ENCODE measurements at regions of chr2 and their contacts with region 1.

Region 1: GRCh38 chr2:230335451-230335863 is 8.5 kb downstream of the SP140L start:
- DNase-seq: no peak
- ATAC-seq: no peak
- H3K4me3 Mint-ChIP-seq: peak overlapping the region; percentile 21
- H3K27ac Mint-ChIP-seq: peak overlapping the region; percentile 73
- H3K4me1 Mint-ChIP-seq: peaks cover 61% of the 10 kb centered on the region
- H3K27me3 Mint-ChIP-seq: no peaks in the 10 kb centered on the region
- CTCF ChIP-seq: no peak

Region 2: GRCh38 chr2:229943770-229944449 is 391.5 kb before region 1 on chr2:
- CTCF ChIA-PET with region 1: no interaction called
- POLR2A ChIA-PET with region 1: no interaction called
- intact Hi-C with region 1: no loop called
- DNase-seq: no peak
- ATAC-seq: no peak
- H3K4me3 Mint-ChIP-seq: no peak overlapping the region
- H3K27ac Mint-ChIP-seq: no peak overlapping the region
- H3K4me1 Mint-ChIP-seq: no peaks in the 10 kb centered on the region
- H3K27me3 Mint-ChIP-seq: no peaks in the 10 kb centered on the region
- CTCF ChIP-seq: no peak

Region 3: GRCh38 chr2:230356084-230356483 is 20.6 kb after region 1 on chr2:
- CTCF ChIA-PET with region 1: no interaction called
- POLR2A ChIA-PET with region 1: interaction called, 10 read pairs
- intact Hi-C with region 1: no loop called
- DNase-seq: no peak
- ATAC-seq: no peak
- H3K4me3 Mint-ChIP-seq: no peak overlapping the region
- H3K27ac Mint-ChIP-seq: no peak overlapping the region
- H3K4me1 Mint-ChIP-seq: peaks cover 19% of the 10 kb centered on the region
- H3K27me3 Mint-ChIP-seq: no peaks in the 10 kb centered on the region
- CTCF ChIP-seq: no peak

Measured in activated B cell treated with CpG ODN at 0.5 μM for 24 hours (primary cell).